ENCODE measurements at regions of chr15 and their contacts with region 1.

Region 1: GRCh38 chr15:79380755-79381497 is 51.2 kb upstream of the MINAR1 start:
- DNase-seq: peak; percentile 78
- H3K4me3 Mint-ChIP-seq: no peak overlapping the region
- H3K27ac Mint-ChIP-seq: no peak overlapping the region
- H3K4me1 Mint-ChIP-seq: no peaks in the 10 kb centered on the region
- H3K27me3 Mint-ChIP-seq: no peaks in the 10 kb centered on the region
- CTCF ChIP-seq: peak; percentile 75

Region 2: DNA sequence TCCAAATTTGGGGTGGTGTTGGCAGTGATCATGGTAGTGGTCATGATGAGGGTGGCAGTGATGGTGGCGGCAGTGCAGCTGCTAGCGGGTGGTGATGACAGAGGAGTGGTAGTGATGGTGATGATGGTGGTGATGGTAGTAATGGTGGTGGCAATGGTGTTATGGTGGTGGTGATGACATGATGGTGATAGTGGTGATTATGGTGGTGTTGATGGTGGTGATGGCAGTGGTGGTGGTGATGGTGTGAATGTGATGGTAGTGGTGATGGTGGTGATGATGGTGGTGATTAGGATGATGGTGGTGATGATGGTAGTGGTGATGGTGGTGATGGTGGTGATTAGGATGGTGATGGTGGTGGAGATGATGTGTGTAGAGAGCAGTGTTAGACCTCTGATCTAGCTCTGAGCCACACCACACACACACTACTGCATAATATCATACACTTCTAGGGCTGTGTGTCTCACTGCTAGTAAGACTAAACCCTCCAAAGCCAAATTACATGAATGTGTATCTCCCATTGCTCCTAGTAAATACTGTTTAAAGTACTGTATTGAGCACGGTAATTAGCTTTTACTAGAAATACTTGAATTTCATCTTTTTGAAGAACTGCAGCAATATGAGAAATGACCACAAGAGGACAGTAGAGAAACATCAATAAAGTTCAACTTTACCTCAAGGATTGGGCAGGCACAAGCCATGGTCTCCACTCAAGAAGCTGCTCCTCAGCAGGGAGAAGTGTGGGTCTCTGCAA is 41.2 kb before region 1 on chr15:
- CTCF ChIA-PET with region 1: interaction called, 38 read pairs
- POLR2A ChIA-PET with region 1: interaction called, 4 read pairs
- intact Hi-C with region 1: no loop called
- DNase-seq: peak; percentile 47
- H3K4me3 Mint-ChIP-seq: no peak overlapping the region
- H3K27ac Mint-ChIP-seq: no peak overlapping the region
- H3K4me1 Mint-ChIP-seq: no peaks in the 10 kb centered on the region
- H3K27me3 Mint-ChIP-seq: no peaks in the 10 kb centered on the region
- CTCF ChIP-seq: peak; percentile 72

Region 3: GRCh38 chr15:79394231-79394630 is 13.3 kb after region 1 on chr15:
- CTCF ChIA-PET with region 1: interaction called, 39 read pairs
- POLR2A ChIA-PET with region 1: no interaction called
- intact Hi-C with region 1: no loop called
- DNase-seq: peak; percentile 38
- H3K4me3 Mint-ChIP-seq: no peak overlapping the region
- H3K27ac Mint-ChIP-seq: no peak overlapping the region
- H3K4me1 Mint-ChIP-seq: no peaks in the 10 kb centered on the region
- H3K27me3 Mint-ChIP-seq: no peaks in the 10 kb centered on the region
- CTCF ChIP-seq: no peak

Region 4: DNA sequence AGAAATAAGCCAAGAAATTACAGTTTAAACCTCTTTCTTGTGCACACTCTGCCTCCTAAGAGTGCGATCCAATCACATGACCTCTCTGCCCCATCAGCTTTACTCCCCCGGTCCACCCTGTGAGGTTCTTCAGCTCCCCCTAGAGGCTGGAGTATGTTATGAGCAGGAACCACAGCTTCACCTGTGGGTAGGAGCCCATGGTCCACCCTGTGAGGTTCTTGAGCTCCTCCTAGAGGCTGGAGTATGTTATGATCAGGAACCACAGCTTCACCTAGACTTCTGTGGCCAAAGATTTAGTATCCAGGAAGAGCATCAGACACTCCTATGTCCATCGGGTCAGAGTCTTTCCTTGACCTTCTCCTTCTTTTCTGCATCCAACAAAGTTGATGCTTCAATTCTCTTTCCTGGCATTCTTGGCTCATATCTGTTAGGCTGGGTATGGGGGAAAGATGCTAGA is 215.2 kb after region 1 on chr15:
- CTCF ChIA-PET with region 1: interaction called, 151 read pairs
- POLR2A ChIA-PET with region 1: no interaction called
- intact Hi-C with region 1: loop called (anchors 1 kb)
- DNase-seq: peak; percentile 95
- H3K4me3 Mint-ChIP-seq: no peak overlapping the region
- H3K27ac Mint-ChIP-seq: no peak overlapping the region
- H3K4me1 Mint-ChIP-seq: no peaks in the 10 kb centered on the region
- H3K27me3 Mint-ChIP-seq: peaks cover 47% of the 10 kb centered on the region
- CTCF ChIP-seq: peak; percentile 84

Region 5: GRCh38 chr15:79863886-79864285 is 483.0 kb after region 1 on chr15:
- CTCF ChIA-PET with region 1: interaction called, 238 read pairs
- POLR2A ChIA-PET with region 1: no interaction called
- intact Hi-C with region 1: no loop called
- DNase-seq: peak; percentile 63
- H3K4me3 Mint-ChIP-seq: no peak overlapping the region
- H3K27ac Mint-ChIP-seq: peak overlapping the region; percentile 26
- H3K4me1 Mint-ChIP-seq: peaks cover 16% of the 10 kb centered on the region
- H3K27me3 Mint-ChIP-seq: no peaks in the 10 kb centered on the region
- CTCF ChIP-seq: no peak

Region 6: DNA sequence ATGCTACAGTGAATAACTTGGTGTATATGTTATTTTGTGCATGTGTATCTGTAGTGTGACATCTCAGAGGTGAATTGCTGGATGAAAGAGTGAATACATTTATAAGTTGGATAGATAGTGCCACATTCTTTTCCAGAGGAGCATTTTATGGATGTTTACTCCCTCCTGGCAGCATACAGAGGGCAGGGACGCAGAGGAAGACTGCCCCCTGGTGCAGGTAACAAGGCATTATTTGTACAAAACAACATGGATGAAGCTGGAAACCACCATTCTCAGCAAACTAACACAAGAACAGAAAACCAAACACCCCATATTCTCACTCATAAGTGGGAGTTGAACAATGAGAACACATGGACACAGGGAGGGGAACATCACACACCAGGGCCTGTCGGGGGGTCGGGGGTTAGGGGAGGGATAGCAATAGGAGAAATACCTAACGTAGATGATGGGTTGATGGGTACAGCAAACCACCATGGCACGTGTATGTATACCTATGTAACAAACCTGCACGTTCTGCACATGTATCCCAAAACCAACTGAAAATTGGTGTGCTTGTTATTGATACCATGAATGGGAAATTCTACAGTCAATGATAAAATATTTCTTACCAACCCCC is 929.0 kb after region 1 on chr15:
- CTCF ChIA-PET with region 1: interaction called, 10 read pairs
- POLR2A ChIA-PET with region 1: interaction called, 3 read pairs
- intact Hi-C with region 1: no loop called
- DNase-seq: peak; percentile 43
- H3K4me3 Mint-ChIP-seq: no peak overlapping the region
- H3K27ac Mint-ChIP-seq: no peak overlapping the region
- H3K4me1 Mint-ChIP-seq: no peaks in the 10 kb centered on the region
- H3K27me3 Mint-ChIP-seq: peaks cover 17% of the 10 kb centered on the region
- CTCF ChIP-seq: peak; percentile 65